ENCODE measurements at regions of chr10 and their contacts with region 1.

Region 1: DNA sequence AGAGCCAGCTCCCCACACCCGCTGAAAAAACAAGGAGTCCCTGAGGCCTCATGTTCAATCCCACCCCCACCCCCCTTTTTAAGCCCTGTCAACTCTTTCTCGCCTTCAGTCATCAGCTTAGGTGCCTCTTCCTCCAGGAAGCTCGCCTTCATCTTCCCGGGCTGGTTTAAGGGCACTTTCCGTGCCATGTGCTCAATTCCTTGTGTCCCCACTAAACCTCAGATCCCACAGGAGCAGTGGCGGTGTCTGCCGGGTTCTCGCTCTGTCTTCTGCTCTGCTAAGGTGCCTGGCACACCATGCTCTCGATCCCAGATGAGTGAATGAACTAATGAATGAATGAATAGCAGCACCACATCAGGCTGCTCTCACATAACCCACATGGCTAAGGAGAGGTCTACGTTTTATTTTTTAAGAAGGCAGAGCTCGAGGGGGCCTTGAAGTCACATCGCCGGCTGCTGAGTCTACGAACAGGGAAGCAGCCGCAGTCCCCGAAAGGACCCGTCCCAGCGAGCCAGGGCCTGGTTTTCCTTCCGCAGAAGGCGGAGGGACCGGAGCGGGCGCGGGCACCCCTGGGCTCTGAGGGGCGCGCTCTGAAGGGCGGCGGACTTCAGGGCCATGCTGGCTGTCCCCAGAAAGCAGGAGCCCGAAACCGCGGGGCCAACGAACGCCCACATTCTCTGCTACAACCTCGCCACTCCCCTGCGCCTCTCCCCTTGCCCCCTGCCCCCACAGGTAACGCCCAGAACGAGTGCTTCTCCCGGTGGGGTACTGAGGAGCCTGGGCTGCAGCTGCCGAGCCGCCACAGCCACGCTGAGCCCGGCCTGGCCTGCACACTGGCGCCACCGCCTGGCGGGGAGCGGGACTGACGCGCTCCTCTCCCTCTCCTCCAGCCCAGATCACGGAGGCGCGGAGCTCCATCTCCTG is 73.4 kb upstream of the KCNMA1 start:
- DNase-seq: peak; percentile 46 to 78
- H3K4me3 ChIP-seq: peak overlapping the region; percentile 31 to 62 (median 38)
- H3K27ac ChIP-seq: no peak overlapping the region
- H3K4me1 ChIP-seq: no peaks in the 10 kb centered on the region
- H3K27me3 ChIP-seq: no peaks in the 10 kb centered on the region
- CTCF ChIP-seq: peak; percentile 76 to 90 (median 89)
- POLR2A ChIP-seq: no peak

Region 2: GRCh38 chr10:77400033-77400432 is 311.0 kb before region 1 on chr10:
- intact Hi-C with region 1: loop called (anchors 5 kb)
- DNase-seq: no peak
- H3K4me3 ChIP-seq: no peak overlapping the region
- H3K27ac ChIP-seq: no peak overlapping the region
- H3K4me1 ChIP-seq: no peaks in the 10 kb centered on the region
- H3K27me3 ChIP-seq: no peaks in the 10 kb centered on the region
- CTCF ChIP-seq: no peak
- POLR2A ChIP-seq: no peak

Region 3: DNA sequence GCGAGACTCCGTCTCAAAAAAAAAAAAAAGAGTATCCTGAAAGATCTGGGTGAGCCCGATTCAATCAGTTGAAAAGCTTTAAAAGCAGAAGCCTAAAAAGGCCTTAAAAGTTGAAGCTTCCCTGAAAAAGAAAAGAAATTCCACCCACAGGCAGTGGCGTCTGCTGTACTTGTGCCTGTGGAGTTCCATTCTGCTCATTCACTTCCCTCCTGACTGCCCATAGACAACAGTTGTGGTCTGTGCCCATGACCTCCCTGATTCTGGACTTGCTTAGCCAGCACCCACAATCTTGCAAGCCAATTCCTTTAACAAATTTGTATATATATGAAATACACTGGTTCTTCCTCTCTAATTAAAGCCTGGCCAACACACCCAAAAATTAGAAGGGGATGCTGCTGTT is 73.8 kb after region 1 on chr10:
- intact Hi-C with region 1: no loop called
- DNase-seq: no peak
- H3K4me3 ChIP-seq: no peak overlapping the region
- H3K27ac ChIP-seq: no peak overlapping the region
- H3K4me1 ChIP-seq: no peaks in the 10 kb centered on the region
- H3K27me3 ChIP-seq: no peaks in the 10 kb centered on the region
- CTCF ChIP-seq: no peak
- POLR2A ChIP-seq: no peak

Measured in breast epithelium (tissue), 4 donors.